Pancreas (tissue), 10 donors: ENCODE measurements at regions of chr2 and their contacts with region 1.

Region 1: GRCh38 chr2:36355151-36355889 is at the start of gene CRIM1:
- DNase-seq: peak; percentile 74 to 88 (median 82)
- ATAC-seq: peak; percentile 69 to 82 (median 75)
- H3K4me3 ChIP-seq: peak within 1 kb of the TSS; percentile 47 to 69 (median 59)
- H3K27ac ChIP-seq: peak within 1 kb of the TSS; percentile 45 to 80 (median 71)
- H3K4me1 ChIP-seq: peaks cover 0 to 6% (median 5%) of the 10 kb centered on the region in 3 donors
- H3K27me3 ChIP-seq: no peaks in the 10 kb centered on the region
- CTCF ChIP-seq: no peak
- total RNA-seq, gene CRIM1: 15.9 to 29.1 (median 22.5) TPM

Region 2: GRCh38 chr2:36137612-36138011 is 217.7 kb before region 1 on chr2:
- intact Hi-C with region 1: no loop called
- DNase-seq: no peak
- ATAC-seq: no peak
- H3K4me3 ChIP-seq: no peak overlapping the region
- H3K27ac ChIP-seq: no peak overlapping the region
- H3K4me1 ChIP-seq: no peaks in the 10 kb centered on the region
- H3K27me3 ChIP-seq: no peaks in the 10 kb centered on the region
- CTCF ChIP-seq: no peak

Region 3: DNA sequence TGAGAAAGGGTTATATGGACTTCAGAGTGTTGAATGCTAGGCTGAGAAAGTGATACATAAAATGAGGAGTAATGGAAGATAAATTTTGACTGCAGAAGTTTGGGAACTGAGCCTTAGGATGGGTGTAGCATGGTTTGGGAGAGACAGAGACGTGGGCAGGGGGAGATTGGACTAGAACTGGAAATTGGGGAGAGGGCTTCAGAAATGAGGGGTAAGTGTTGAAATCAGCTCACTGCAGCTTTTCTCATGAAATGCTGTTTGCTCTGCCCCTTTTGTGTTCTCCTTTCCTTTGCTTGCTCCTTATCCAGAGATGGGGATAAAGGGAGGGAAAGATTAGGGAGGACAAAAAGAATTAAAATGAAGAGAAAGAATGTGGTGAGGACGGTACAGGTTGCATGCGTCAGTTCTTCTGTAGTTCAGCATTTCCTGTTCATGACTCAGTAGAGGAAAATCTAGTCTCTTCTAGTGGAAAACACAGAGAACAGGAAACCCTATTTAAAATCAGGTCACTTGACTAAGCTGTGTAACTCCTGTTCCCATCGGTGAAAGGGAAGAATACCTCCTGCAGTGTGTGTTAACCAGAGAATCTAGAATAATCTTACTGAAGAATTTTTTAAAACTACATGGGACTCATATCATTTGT is 105.8 kb after region 1 on chr2:
- intact Hi-C with region 1: loop called in 1 of 3 experiments (anchors 5 kb)
- DNase-seq: no peak
- ATAC-seq: peak in 3 of 4 donors; percentile 65 to 80 (median 79)
- H3K4me3 ChIP-seq: no peak overlapping the region
- H3K27ac ChIP-seq: peak overlapping the region in 3 of 4 donors; percentile 16 to 68 (median 31)
- H3K4me1 ChIP-seq: peaks cover 0 to 14% (median 0%) of the 10 kb centered on the region in 3 donors
- H3K27me3 ChIP-seq: no peaks in the 10 kb centered on the region
- CTCF ChIP-seq: no peak

Region 4: GRCh38 chr2:36589230-36589630 is 233.9 kb after region 1 on chr2:
- intact Hi-C with region 1: no loop called
- DNase-seq: no peak
- ATAC-seq: peak in 2 of 4 donors; percentile 18 to 23
- H3K4me3 ChIP-seq: no peak overlapping the region
- H3K27ac ChIP-seq: no peak overlapping the region
- H3K4me1 ChIP-seq: no peaks in the 10 kb centered on the region
- H3K27me3 ChIP-seq: no peaks in the 10 kb centered on the region
- CTCF ChIP-seq: no peak

Region 5: GRCh38 chr2:36650031-36650430 is 294.7 kb after region 1 on chr2:
- intact Hi-C with region 1: loop called in 1 of 3 experiments (anchors 10 kb)
- DNase-seq: no peak
- ATAC-seq: peak in 3 of 4 donors; percentile 32 to 71 (median 40)
- H3K4me3 ChIP-seq: no peak overlapping the region
- H3K27ac ChIP-seq: no peak overlapping the region
- H3K4me1 ChIP-seq: no peaks in the 10 kb centered on the region
- H3K27me3 ChIP-seq: no peaks in the 10 kb centered on the region
- CTCF ChIP-seq: no peak

Region 6: DNA sequence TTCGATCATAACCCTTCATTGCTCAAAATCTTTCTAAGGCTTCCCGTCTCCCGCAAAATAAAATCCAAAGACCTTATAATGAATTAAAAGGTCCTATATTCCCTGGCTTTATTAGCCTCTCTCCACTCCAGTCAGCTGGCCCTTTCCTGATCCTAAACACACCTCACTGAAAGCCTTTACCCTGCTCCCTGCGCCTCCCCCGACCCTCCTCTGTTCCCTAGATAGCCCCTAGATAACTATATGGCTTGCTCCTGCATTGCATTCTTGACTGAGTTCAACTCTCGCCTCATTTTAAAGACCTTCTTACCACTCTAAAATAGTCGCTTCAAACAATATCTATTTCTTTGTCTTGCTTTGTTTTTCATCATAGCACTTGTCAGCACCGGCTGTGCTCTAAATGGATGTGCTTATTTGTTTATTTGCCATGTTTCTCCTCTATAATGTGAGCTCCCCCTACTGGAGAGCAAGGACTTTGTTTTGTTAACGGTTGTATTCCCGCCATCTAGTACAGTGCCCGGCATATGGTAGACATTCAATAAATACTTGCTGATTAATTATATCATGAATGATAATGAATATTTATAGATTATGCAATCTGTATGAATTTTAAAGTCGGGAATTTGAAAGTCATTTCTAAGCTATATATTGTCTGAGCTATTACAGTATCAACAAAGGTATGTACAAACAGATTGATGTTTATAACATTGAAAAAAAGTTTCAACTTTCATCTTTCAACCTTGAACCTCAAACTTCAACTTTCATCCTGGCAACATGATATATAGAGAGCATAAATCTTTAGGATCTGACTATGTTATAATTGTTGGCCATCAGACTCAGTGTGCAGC is 308.8 kb after region 1 on chr2:
- intact Hi-C with region 1: loop called (anchors 5 to 10 kb)
- DNase-seq: peak in 2 of 6 donors; percentile 13 to 30
- ATAC-seq: peak; percentile 89 to 93 (median 91)
- H3K4me3 ChIP-seq: no peak overlapping the region
- H3K27ac ChIP-seq: no peak overlapping the region
- H3K4me1 ChIP-seq: no peaks in the 10 kb centered on the region
- H3K27me3 ChIP-seq: peaks cover 0 to 4% (median 2%) of the 10 kb centered on the region in 4 donors
- CTCF ChIP-seq: peak; percentile 39 to 70 (median 52)